ENCODE measurements at regions of chr6 and their contacts with region 1.

Region 1: GRCh38 chr6:12605888-12606345 is 110.7 kb upstream of the PHACTR1 start:
- DNase-seq: peak; percentile 90
- ATAC-seq: peak; percentile 66
- H3K4me3 ChIP-seq: 0 out of 2 replicates have a peak overlapping the region, but pooled peaks have one; percentile 28
- H3K27ac ChIP-seq: peak overlapping the region; percentile 41
- H3K4me1 ChIP-seq: peaks cover 46% of the 10 kb centered on the region
- H3K27me3 ChIP-seq: no peaks in the 10 kb centered on the region
- CTCF ChIP-seq: peak; percentile 70 to 87 (median 80); a peak in 5 of 6 replicates
- EP300 ChIP-seq: peak in 1 of 2 experiments; percentile 64; a peak in 2 of 4 replicates
- POLR2A ChIP-seq: no peak
- RAD21 ChIP-seq: peak; percentile 80

Region 2: GRCh38 chr6:11653028-11653583 is 952.8 kb before region 1 on chr6:
- CTCF ChIA-PET with region 1: interaction called, 79 read pairs
- POLR2A ChIA-PET with region 1: interaction called, 4 read pairs
- RAD21 ChIA-PET with region 1: interaction called, 48 read pairs
- SMC1A ChIA-PET with region 1: interaction called, 62 read pairs
- in situ Hi-C with region 1: loop called (anchors 5 kb)
- intact Hi-C with region 1: loop called (anchors 1 kb)
- DNase-seq: no peak
- ATAC-seq: peak; percentile 80
- H3K4me3 ChIP-seq: no peak overlapping the region
- H3K27ac ChIP-seq: no peak overlapping the region
- H3K4me1 ChIP-seq: peaks cover 17% of the 10 kb centered on the region
- H3K27me3 ChIP-seq: no peaks in the 10 kb centered on the region
- CTCF ChIP-seq: no peak
- EP300 ChIP-seq: no peak
- POLR2A ChIP-seq: no peak
- RAD21 ChIP-seq: no peak

Region 3: DNA sequence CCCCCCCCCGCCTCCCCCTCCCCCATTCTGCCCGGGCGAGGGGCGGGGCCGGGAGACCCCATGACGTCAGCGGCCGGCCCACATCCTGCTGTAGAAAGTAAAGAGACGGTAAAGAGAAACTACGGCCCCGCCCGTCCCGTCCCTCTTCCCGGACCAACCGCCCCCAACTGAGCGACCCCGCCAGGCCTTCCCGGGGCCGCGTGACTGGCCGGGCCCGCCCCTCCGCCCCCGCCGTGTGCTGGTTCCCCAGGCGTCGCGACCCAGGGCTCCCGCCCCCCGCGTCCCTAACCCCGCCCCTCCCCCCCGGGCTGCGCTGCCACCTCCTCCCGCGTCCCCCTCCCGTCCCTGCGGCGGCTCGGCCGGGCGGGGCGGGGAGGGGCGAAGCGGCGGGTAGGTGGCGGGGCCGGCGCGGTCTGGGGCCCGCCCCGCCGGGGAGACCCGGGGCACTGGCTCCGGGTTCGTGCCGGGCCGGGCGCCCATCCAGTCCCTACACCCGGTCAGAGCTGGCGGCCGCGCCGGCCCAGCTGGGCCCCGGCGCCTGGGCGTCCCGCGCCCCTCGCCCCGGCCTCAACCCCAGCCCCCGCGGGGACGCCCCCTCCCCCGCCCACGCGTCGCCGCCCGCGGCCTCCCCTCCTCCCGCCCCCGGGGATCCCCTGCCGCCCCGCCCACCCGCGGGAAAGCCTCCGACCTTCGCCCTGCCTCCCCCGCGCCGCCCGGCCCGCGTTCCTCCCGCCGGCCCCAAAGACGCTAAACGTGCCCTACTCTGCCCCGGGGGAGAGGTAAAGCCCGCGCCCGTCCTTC is 594.4 kb before region 1 on chr6:
- CTCF ChIA-PET with region 1: no interaction called
- POLR2A ChIA-PET with region 1: no interaction called
- RAD21 ChIA-PET with region 1: interaction called, 4 read pairs
- SMC1A ChIA-PET with region 1: interaction called, 3 read pairs
- in situ Hi-C with region 1: loop called (anchors 10 kb)
- intact Hi-C with region 1: loop called (anchors 1 kb)
- DNase-seq: peak; percentile 81
- ATAC-seq: peak; percentile 74
- H3K4me3 ChIP-seq: no peak overlapping the region
- H3K27ac ChIP-seq: peak overlapping the region; percentile 97; the same call in 1 of the 2 replicates
- H3K4me1 ChIP-seq: peaks cover 8% of the 10 kb centered on the region
- H3K27me3 ChIP-seq: no peaks in the 10 kb centered on the region
- CTCF ChIP-seq: no peak
- EP300 ChIP-seq: peak in 1 of 2 experiments; percentile 47; a peak in 1 of 4 replicates
- POLR2A ChIP-seq: peak; percentile 77
- RAD21 ChIP-seq: no peak

Region 4: GRCh38 chr6:12296255-12296573 is 309.7 kb before region 1 on chr6:
- CTCF ChIA-PET with region 1: interaction called, 403 read pairs
- POLR2A ChIA-PET with region 1: interaction called, 27 read pairs
- RAD21 ChIA-PET with region 1: interaction called, 384 read pairs
- SMC1A ChIA-PET with region 1: interaction called, 382 read pairs
- in situ Hi-C with region 1: no loop called
- intact Hi-C with region 1: loop called (anchors 1 kb)
- DNase-seq: no peak
- ATAC-seq: no peak
- H3K4me3 ChIP-seq: no peak overlapping the region
- H3K27ac ChIP-seq: no peak overlapping the region
- H3K4me1 ChIP-seq: peaks cover 8% of the 10 kb centered on the region
- H3K27me3 ChIP-seq: no peaks in the 10 kb centered on the region
- CTCF ChIP-seq: no peak
- EP300 ChIP-seq: no peak
- POLR2A ChIP-seq: no peak
- RAD21 ChIP-seq: no peak

Region 5: DNA sequence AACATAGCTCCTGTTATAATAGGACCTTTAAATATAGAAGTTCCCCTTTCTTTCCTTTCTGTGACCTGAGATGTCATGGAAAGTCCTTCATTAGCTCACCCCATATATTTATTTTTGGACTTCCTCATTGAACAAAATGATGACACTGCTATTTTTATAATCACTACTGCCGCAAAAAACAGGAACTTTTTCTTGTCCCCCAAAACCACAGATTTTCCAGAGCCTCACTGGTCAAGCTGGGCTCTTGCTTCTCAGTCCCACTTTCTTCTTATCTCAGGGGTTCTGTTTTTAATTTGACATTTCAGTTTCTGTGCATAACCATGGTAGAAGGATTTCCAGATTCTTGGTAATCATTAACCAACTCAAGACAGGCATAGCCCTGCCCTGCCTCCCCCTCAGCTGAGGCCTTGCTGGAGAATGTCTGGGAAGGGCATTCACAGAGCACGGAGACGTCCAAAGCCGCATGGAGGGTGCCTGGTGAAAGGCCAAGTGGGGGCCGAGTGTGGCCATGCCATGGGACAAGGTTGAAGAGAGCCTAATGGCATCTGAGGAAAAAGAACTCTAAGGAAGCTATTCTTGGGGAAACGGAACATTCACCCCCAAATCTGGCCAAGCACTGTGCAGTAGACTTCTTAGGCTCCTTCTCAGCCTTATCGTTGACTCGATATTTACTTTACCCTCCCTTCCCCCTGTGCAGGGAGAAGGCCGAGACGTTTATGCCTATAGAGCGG is 242.1 kb before region 1 on chr6:
- CTCF ChIA-PET with region 1: interaction called, 28 read pairs
- POLR2A ChIA-PET with region 1: interaction called, 9 read pairs
- RAD21 ChIA-PET with region 1: interaction called, 182 read pairs
- SMC1A ChIA-PET with region 1: interaction called, 172 read pairs
- in situ Hi-C with region 1: loop called (anchors 5 kb)
- intact Hi-C with region 1: loop called (anchors 2 kb)
- DNase-seq: peak; percentile 95
- ATAC-seq: peak; percentile 88
- H3K4me3 ChIP-seq: no peak overlapping the region
- H3K27ac ChIP-seq: peak overlapping the region; percentile 70
- H3K4me1 ChIP-seq: peaks cover 38% of the 10 kb centered on the region
- H3K27me3 ChIP-seq: no peaks in the 10 kb centered on the region
- CTCF ChIP-seq: no peak
- EP300 ChIP-seq: peak; percentile 84 to 93
- POLR2A ChIP-seq: no peak
- RAD21 ChIP-seq: 0 out of 2 replicates have a peak, but pooled peaks have one; percentile 6

Region 6: DNA sequence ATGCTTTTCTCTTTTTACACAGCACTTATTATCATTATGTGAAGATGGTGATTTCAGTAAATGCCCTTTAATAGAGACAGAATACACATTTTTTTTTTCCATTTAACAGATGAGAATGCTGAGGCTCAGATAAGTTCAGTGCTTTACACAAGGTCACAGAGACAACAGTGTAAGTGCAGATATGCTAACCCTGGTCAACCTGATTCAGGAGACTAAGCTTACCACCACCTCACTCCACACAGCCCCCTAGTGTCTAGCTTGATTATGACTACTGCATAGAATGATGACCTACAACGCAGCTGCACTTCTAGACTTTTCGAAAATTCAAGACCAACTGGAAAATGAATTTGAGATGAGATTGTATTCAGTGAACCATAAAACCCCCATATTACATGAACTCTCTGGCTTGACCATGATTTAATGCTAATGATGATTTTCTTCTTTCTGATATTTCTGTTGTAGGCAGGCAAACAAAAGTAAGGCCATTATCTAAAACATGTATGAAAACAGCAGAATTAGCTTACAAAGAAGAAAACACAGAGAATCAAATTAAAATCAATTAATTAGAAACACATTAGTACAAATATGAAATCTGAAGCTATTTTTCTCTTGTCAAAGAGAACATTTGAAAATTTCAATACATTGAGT is 101.5 kb before region 1 on chr6:
- CTCF ChIA-PET with region 1: interaction called, 47 read pairs
- POLR2A ChIA-PET with region 1: no interaction called
- RAD21 ChIA-PET with region 1: interaction called, 27 read pairs
- SMC1A ChIA-PET with region 1: interaction called, 25 read pairs
- in situ Hi-C with region 1: no loop called
- intact Hi-C with region 1: loop called (anchors 2 kb)
- DNase-seq: peak; percentile 32
- ATAC-seq: peak; percentile 99
- H3K4me3 ChIP-seq: no peak overlapping the region
- H3K27ac ChIP-seq: no peak overlapping the region
- H3K4me1 ChIP-seq: no peaks in the 10 kb centered on the region
- H3K27me3 ChIP-seq: no peaks in the 10 kb centered on the region
- CTCF ChIP-seq: peak; percentile 58 to 76 (median 68)
- EP300 ChIP-seq: no peak
- POLR2A ChIP-seq: no peak
- RAD21 ChIP-seq: peak; percentile 65

Measured in GM12878 (cell line).